Right ventricle myocardium superior (tissue), 1 donor: ENCODE measurements at regions of chr2 and their contacts with region 1.

Region 1: DNA sequence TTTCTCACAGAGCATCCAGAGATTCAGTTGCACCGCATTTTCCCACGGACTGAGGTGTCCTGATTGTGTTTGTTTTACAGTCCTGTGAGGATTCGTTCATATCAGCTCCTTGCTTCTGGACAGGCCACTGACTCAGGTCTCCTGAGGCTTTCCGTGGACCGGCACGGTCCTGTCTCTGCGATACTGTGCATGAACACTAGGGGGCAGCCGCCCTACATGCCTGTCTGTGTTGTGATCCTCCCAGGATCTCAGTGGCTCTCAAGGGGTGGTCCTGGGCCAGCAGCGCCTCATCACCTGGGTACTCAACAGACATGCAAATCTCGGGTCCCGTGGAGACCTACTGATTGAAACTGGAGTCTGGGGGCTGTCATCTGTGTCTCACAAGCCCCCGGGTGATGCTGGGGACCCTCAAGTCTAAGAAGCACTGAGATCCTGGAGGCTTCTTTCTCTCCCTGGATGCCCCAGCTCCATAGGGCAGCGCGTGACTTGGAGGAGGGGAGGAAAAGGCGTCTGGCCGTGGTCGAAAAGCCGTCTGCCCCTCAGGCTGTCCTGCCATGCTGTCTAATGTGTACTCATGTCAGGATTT is 28.9 kb downstream of the IL1R2 start:
- DNase-seq: peak; percentile 92
- ATAC-seq: peak; percentile 96

Region 2: DNA sequence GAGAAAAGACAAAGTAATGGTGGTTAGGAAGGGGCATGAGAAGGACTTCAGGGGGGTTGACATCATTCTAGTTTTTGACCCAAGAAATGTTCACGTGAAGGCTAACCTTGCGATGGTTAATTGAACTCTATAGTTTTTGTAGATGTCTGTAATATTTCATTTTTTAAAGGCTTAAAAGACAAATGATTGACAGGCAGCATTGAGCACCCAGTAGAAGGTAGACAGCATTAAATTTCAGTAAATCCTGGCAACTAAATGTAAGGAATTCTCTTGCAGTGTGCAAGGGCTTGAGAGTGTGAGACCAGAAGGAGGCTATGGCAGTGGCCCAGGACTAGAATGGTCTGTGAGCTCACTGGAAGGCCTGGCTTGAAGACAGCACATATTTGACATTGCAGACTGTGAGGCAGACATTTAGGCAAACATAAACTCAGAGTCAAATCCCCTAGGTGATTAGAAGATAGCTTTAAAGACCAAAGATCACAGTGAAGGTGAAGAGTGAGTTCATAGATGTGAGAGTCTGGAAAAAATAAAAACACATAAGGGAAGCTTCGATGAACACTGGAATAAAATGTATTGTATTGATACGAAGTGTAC is 423.2 kb before region 1 on chr2:
- intact Hi-C with region 1: no loop called
- DNase-seq: peak; percentile 58
- ATAC-seq: peak; percentile 95

Region 3: DNA sequence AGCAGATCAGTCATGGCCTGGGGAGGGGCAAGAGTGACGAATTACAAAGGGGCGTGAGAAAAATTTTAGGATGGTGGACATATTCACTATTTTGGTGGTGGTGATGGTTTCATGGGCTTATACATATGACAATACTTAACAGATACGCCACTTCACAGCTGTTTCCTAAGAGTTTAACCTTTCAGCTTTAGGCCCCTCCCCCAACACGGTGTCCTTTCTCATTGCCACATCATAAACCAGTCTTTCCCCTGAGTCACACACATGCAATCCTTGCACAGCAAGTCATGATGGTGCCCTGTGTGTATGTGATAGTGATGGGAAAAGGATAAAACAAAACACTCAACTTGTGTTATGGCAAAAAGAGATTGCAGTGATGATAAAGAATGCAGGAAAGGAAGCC is 74.2 kb after region 1 on chr2:
- intact Hi-C with region 1: no loop called
- DNase-seq: no peak
- ATAC-seq: no peak

Region 4: DNA sequence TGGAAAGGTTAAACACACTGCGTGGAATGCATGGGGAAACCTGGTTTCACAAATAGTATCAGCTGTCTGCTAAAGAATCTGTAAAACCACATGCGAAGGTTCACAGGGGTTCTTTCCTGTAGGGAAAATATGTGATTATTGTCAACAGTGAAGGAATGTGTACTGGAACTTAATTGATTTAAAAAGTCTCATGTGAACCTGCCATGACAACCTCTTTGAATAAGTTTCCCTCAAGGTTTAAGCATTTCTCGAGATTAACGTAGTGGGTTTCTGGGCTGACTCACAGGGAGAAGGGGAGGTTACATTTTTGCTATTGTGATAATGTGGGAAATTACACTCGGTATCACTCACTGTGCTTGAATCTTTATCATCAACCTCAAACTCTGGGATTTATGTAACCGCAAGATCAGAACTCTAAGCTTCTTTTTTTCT is 93.6 kb after region 1 on chr2:
- intact Hi-C with region 1: no loop called
- DNase-seq: no peak
- ATAC-seq: no peak

Region 5: GRCh38 chr2:102166189-102166845 is 145.6 kb after region 1 on chr2:
- intact Hi-C with region 1: loop called (anchors 2 kb)
- DNase-seq: no peak
- ATAC-seq: peak; percentile 85

Region 6: DNA sequence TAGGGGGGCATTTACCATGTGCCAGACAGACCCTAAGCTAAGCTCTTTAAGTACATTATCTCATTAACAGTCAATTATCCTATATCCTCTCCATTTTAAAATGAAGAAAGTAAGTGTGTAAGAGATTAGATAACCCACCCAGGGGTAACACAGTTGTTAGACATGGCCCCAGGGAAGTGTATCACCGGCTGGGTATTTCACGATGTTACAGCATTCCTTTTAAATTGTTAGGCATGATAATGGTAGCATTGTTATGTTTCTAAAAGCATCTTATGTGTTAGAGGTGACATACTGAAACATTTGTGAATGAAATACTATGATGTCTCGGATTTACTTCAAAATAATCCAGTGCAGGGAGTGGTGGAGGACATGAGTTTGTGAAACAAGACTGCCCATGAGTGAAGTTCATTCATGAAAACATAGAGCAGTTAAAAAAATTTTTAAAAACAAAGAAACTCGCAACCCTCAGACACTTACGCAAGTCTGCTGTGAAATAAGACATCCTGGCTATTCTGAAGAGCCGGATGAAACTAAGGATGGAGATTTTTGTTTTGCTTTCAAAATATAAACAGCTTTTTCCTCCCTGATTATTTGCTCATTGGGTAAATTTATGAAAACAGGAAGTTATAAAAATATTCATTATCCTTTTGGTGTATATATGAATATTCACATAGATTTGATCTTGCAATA is 221.1 kb after region 1 on chr2:
- intact Hi-C with region 1: loop called (anchors 2 kb)
- DNase-seq: no peak
- ATAC-seq: no peak

Region 7: DNA sequence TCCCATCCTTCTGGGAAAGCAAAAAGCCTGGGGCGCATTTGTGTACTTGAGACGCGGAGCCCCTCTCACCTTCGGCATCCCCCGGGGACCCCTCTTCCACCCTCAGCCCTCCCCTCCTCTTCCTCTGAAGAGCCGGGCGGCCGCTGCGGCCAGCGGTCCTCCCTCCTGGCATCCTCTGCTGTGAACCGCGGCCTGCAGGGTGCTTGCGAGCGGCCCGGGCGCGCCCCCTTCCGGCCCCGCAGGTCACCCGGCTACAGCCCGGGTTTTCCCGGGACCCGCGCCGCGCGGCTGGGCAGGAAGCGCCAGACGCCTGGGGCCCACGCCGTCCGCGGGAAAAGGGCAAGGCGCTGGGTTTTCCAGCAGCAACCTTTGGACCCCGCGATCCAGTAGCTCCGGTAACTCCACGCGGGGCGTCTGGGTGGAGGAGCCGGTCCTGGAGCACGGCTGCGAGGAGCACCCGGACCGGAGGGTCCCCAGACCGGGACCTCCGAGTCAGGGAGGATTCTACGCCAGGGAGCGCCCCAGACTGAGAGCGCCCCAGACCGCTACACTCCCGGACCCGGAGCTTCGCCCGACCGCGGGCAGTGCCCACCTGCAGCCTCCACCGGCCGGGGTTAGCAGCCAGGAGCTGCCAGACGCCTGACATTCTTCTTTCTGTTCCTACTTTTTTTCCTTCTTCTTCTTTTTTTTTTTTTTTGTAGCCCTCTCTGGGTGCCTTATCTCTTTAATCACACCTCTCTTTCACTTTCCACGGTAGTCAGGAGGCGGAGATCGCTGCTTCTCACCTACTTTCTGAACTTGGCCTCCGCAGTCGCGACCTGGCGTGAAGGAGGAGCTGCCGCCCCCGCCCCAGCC is 335.1 kb after region 1 on chr2 and contains the start of gene IL18R1:
- intact Hi-C with region 1: loop called (anchors 10 kb)
- DNase-seq: peak; percentile 87
- ATAC-seq: peak; percentile 100
- total RNA-seq, gene IL18R1: 0.67 TPM